ENCODE measurements at regions of chr17 and their contacts with region 1.

Region 1: DNA sequence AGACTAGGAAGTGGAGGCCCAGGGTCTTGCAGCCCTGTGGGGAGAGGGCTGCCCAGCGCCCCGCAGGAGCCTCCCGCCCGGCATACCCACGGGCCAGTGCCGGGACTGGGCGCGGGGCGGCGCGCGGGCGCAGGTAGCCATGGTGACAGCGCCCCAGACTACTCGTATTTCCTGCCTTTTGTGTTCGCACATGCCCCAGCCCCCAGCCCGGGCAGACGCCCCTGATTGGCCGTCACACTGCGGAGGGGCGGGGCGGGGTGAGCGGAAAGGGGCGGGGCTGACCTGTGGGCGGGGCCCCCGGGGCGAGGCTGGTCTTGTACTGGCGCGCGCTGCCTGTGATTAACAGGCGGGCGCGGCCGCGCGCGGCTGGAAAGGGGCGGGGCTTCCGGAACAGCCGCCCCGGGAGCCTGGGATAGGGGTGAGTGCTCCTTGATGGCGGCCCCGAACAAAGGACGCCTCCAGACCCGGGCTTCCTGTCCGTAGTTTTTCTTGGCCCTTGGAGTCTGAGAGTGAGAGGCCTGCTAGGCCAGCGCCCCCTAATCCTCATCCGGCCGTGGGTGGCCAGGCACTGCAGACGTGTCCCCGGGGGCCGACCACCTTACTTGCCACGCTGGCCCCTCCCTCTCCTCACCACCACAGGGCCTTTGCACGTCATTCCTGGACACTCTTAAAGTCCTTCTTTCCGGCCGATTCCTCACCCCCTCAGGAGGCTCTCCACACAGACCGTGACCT is 71.0 kb downstream of the RAI1 start:
- DNase-seq: peak; percentile 99
- ATAC-seq: peak; percentile 89
- H3K4me3 Mint-ChIP-seq: peak overlapping the region; percentile 85
- H3K27ac Mint-ChIP-seq: peak overlapping the region; percentile 99
- H3K4me1 Mint-ChIP-seq: peaks cover 68% of the 10 kb centered on the region
- H3K27me3 Mint-ChIP-seq: no peaks in the 10 kb centered on the region

Region 2: DNA sequence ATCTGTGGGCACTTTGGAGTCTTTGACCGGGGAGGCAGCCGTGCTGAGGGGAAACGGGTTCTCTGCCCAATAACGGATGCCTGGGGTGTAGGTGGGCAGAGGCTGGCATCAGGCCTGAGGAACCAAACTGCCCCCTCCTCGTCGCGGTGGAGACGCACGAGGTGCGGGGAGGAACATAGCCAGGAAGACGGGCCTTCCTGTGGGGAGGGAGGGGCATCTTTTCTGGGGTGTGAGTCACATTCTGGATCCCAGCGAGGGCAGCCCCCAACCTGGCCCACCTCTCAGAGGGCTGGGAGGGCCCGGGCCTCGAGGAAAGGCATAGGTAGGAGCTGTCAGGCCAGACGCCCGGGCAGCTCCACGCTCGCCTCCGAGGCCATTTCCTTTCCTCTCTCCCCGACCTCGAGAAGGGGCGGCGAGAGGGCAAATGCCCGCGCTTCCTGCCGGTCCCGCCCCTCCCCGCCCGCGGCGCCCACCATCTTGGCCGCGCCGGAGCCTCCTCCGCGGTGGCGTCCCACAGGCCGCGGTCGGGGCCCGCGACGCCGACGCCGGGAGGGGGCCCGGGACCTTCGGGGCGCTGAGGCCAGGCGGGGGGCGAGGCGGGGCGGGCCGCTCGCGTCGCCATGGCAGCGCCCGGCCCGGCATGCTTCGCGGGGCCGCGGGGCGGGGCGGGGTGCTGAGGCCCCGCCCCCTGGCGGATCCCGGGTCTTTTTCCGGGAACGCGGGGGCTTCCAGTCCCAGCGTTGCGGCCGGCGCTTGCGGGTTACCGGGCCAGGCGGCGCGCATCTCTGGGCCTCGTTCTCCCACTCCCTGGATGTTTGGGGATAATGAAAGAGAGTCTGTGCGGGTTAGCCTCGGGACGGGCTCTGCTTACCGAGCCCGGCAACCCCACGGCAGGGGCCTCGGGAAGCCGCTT is 57.8 kb before region 1 on chr17:
- CTCF ChIA-PET with region 1: interaction called, 3 read pairs
- POLR2A ChIA-PET with region 1: interaction called, 5 read pairs
- intact Hi-C with region 1: loop called in 1 of 2 experiments (anchors 1 kb)
- DNase-seq: peak; percentile 79
- ATAC-seq: peak; percentile 69
- H3K4me3 Mint-ChIP-seq: peak overlapping the region; percentile 81
- H3K27ac Mint-ChIP-seq: peak overlapping the region; percentile 98
- H3K4me1 Mint-ChIP-seq: peaks cover 66% of the 10 kb centered on the region
- H3K27me3 Mint-ChIP-seq: no peaks in the 10 kb centered on the region

Region 3: DNA sequence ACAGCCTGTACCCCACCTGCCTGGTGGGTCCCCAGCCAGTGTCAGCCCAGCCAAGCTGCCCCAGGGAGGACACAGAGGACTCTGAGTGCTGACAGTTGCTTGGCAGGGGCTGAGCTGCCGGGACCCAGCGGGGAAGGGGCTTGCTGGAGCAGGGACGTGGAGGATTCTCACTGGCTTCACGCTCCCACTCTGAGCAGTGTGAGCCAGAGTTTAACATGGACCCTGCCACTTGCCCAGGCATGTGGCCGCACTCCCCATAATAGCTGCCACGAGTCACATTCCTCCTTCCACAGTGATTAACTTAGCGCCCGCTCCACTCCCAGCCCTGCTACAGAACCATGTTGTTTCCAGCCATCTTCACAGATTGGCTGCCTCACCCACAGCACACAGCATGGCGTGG is 53.3 kb after region 1 on chr17:
- CTCF ChIA-PET with region 1: no interaction called
- POLR2A ChIA-PET with region 1: no interaction called
- intact Hi-C with region 1: no loop called
- DNase-seq: no peak
- ATAC-seq: no peak
- H3K4me3 Mint-ChIP-seq: no peak overlapping the region
- H3K27ac Mint-ChIP-seq: no peak overlapping the region
- H3K4me1 Mint-ChIP-seq: peaks cover 3% of the 10 kb centered on the region
- H3K27me3 Mint-ChIP-seq: no peaks in the 10 kb centered on the region

Region 4: DNA sequence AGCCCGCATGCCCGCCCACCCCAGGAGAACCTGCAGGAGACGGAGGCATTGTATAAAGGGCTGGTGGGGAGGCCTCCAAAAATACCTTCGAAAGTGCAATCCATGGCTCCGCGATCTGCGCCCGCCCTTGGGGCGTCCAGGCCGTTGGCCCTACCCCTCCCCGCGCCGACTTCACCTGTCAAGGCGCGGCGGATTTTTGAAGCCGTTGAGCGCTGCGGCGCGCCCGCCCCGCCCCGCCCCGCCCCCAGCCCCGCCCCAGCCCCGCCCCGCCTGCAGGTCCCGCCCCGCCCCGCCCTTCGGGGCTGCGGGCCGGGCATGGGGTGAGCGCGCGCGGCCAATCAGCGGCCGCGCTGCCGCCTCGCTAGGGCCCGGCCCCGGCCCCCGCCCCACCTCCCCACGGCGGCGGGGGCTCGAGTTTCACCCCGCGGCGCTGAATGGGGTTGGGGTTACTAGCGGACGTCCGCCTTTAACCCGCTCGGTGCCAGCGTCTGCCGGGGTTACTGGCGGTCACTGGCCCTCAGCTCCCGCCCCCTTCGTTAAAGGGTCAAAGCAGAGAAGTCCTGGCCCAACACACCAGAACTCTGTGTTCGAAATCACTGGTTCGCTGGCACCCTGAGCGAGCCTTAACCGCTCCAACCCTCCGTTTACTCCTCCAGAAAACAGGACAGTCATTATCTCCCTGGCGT is 71.3 kb after region 1 on chr17:
- CTCF ChIA-PET with region 1: no interaction called
- POLR2A ChIA-PET with region 1: no interaction called
- intact Hi-C with region 1: loop called (anchors 1 to 5 kb)
- DNase-seq: peak; percentile 90
- ATAC-seq: peak; percentile 80
- H3K4me3 Mint-ChIP-seq: peak overlapping the region; percentile 72
- H3K27ac Mint-ChIP-seq: peak overlapping the region; percentile 96
- H3K4me1 Mint-ChIP-seq: peaks cover 92% of the 10 kb centered on the region
- H3K27me3 Mint-ChIP-seq: no peaks in the 10 kb centered on the region

Region 5: GRCh38 chr17:17849845-17850373 is 97.7 kb after region 1 on chr17:
- CTCF ChIA-PET with region 1: interaction called, 4 read pairs
- POLR2A ChIA-PET with region 1: no interaction called
- intact Hi-C with region 1: loop called in 1 of 2 experiments (anchors 1 kb)
- DNase-seq: peak; percentile 90
- ATAC-seq: peak; percentile 64
- H3K4me3 Mint-ChIP-seq: peak overlapping the region; percentile 34
- H3K27ac Mint-ChIP-seq: peak overlapping the region; percentile 95
- H3K4me1 Mint-ChIP-seq: peaks cover 72% of the 10 kb centered on the region
- H3K27me3 Mint-ChIP-seq: no peaks in the 10 kb centered on the region

Region 6: DNA sequence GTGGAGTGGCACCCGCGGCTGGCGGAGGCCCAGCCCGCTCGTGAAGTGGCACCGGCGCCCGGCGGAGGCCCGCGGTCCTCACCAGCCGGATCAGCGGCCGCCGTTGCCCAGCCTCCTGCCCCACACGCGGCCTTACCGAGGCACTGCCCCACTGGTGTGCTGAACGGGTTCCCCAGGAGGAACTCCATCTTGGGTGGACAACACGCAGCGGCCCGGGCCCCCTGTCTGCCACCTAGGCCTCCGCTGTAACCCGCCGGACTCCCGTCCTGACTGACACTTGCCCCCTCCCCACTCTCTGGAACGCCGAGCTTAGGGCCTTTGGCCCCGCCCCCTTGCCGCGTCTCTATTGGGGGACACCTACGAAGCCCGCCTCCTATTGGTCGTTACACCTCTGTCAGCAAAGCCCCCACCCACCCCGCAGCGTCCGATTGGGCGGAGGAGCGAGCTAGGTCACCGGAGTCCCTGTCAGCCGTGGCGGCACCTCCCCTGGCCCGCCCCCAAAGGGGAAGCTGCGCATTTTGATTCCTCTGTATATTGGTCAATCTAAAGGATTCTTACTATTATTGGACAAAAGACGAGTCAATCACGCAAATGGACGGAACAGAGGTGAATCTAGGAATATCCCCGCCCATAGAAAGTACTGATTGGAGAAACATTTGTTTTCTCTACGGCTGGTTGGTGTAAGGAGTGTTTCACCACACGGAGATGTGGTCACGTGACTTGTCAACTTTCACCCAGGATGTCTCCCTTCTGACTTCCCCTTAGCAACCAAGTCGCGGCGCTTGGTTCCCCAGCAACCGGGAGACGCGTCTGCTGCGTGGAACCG is 220.1 kb after region 1 on chr17 and contains the starts of genes DRC3 and TOM1L2:
- CTCF ChIA-PET with region 1: no interaction called
- POLR2A ChIA-PET with region 1: no interaction called
- intact Hi-C with region 1: loop called (anchors 1 kb)
- DNase-seq: peak; percentile 100
- ATAC-seq: peak; percentile 97
- H3K4me3 Mint-ChIP-seq: peak within 1 kb of the TSS; percentile 86
- H3K27ac Mint-ChIP-seq: peak within 1 kb of the TSS; percentile 76
- H3K4me1 Mint-ChIP-seq: peaks cover 37% of the 10 kb centered on the region
- H3K27me3 Mint-ChIP-seq: no peaks in the 10 kb centered on the region
- total RNA-seq, gene DRC3: 0.11 to 0.18 TPM
- total RNA-seq, gene TOM1L2: 11.3 to 11.9 TPM

Region 7: GRCh38 chr17:18314731-18315561 is 562.7 kb after region 1 on chr17 and contains the starts of genes SMCR8 and TOP3A:
- CTCF ChIA-PET with region 1: no interaction called
- POLR2A ChIA-PET with region 1: no interaction called
- intact Hi-C with region 1: loop called in 1 of 2 experiments (anchors 2 kb)
- DNase-seq: peak; percentile 99
- ATAC-seq: peak; percentile 95
- H3K4me3 Mint-ChIP-seq: peak within 1 kb of the TSS; percentile 85
- H3K27ac Mint-ChIP-seq: peak within 1 kb of the TSS; percentile 100
- H3K4me1 Mint-ChIP-seq: peaks cover 71% of the 10 kb centered on the region
- H3K27me3 Mint-ChIP-seq: no peaks in the 10 kb centered on the region
- total RNA-seq, gene SMCR8: 13.2 to 14.5 TPM
- total RNA-seq, gene TOP3A: 44.1 to 57.9 TPM